Lower leg skin (tissue), 4 donors: ENCODE measurements at regions of chr2 and their contacts with region 1.

Region 1: GRCh38 chr2:12534646-12535263 is 182.0 kb upstream of the TRIB2 start:
- DNase-seq: no peak
- H3K4me3 ChIP-seq: no peak overlapping the region
- CTCF ChIP-seq: no peak
- POLR2A ChIP-seq: no peak

Region 2: DNA sequence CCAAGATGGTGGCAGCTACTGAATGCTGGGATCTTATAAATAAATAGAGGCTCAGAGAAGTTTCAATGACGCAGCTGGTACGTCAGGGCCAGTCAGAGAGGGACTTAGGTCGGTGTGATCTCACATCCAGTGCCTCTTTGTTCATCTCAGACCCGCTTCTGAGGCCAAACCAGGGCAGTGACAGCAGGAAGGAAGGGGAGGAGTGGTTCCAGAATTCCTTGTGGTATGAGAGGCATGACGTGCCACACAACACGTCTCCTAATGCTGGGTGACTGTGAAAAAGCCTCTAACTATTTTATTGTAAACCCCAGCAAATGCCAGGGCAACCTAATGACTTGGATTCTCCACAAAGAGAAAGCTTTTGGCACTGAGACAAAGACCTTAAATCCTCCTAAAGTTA is 365.0 kb before region 1 on chr2:
- intact Hi-C with region 1: no loop called
- DNase-seq: peak in 1 of 2 donors; percentile 61
- H3K4me3 ChIP-seq: no peak overlapping the region
- CTCF ChIP-seq: no peak
- POLR2A ChIP-seq: no peak

Region 3: DNA sequence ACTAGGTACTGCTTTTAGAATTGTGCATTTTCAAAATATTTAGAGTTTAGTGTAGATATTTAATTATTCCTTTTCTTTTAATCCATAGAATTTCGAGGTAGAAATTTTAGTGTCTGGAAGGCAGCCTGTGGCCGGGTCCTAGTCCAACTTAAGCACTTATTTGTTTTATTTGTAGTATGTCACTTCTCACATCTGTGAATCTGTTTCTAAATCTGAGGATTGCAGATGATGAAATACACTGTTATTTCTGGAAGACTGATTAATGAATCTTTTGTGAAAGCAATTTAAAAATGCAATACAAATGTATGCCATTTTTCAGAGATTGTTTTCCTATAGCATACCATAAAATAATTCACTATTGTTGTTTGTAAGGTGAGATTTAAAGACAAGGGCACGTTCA is 301.9 kb before region 1 on chr2:
- intact Hi-C with region 1: loop called (anchors 5 kb)
- DNase-seq: no peak
- H3K4me3 ChIP-seq: no peak overlapping the region
- CTCF ChIP-seq: no peak
- POLR2A ChIP-seq: no peak